ENCODE measurements at regions of chr22 and their contacts with region 1.

Region 1: DNA sequence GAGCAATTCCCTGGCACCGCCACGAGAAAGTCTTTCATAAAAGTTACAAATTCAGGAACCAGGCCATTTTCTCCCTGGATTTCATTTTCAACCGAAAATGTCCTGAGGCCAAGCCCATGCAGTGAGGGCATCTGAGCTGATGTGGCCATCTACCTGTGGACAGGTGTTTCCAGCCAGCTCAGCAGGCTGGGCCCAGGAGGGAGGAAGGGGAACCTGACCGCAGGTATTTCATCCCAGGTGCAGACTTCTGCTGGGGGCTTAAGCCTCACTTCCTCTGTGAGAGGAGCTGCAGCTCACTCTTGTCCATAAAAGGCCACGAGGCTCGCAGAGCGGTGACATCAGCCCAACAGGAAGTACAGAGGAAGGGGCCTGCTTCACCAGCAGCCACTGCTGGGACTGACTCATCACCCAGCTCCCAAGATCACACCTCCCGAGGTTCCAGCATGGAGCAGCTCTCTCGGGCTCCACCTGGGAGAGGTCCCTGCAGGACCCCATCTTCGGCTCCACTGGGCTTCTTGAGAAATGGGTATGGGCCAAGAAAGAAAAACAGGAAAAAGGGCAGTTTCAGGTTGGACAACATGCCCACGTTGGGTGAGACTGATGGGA is 56.4 kb downstream of the MYH9 start:
- DNase-seq: peak; percentile 90
- H3K4me3 Mint-ChIP-seq: peak overlapping the region; percentile 75
- H3K27ac Mint-ChIP-seq: peak overlapping the region; percentile 99
- H3K4me1 Mint-ChIP-seq: peaks cover 91% of the 10 kb centered on the region
- H3K27me3 Mint-ChIP-seq: no peaks in the 10 kb centered on the region

Region 2: DNA sequence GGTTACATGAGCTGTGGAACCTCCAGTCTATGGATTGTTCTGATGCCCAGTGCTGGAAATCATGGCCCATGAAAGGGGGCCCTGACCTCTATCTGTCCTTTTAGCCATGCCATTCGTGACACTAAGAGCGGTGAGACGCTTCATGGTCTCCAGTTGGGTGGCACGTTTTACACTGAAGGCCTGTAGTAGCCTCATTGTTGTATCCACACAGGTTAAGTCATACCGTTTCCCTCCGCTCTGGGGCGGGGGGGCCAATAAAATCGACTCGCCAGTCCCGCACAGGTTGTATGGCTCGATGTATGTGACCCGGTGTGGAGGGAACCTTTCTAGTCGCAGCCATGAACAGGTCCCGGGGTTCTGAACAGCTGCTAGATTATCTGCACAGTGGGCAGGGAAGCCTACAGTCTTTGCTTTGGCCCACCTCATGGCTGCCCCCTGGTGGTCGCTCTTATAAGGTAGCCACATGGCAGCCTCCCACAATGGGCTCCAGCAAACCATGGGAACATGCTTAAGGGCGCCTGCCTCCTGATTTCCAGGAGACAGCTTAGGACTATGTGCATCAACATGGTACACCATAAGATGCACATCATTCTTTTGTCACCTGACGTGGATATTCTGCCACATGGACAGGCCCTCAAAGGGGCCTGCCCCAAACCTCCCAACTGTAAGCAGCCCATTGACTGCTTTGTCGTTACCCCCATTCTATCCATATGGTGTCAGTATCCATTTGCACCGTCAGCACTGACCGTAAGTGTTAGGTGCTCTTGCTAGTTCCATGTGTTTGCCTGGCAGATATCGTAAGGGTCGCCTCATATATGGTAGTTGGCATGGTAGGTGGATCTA is 151.2 kb before region 1 on chr22:
- CTCF ChIA-PET with region 1: no interaction called
- POLR2A ChIA-PET with region 1: no interaction called
- intact Hi-C with region 1: no loop called
- DNase-seq: peak; percentile 89
- H3K4me3 Mint-ChIP-seq: no peak overlapping the region
- H3K27ac Mint-ChIP-seq: no peak overlapping the region
- H3K4me1 Mint-ChIP-seq: peaks cover 6% of the 10 kb centered on the region
- H3K27me3 Mint-ChIP-seq: no peaks in the 10 kb centered on the region

Region 3: GRCh38 chr22:36301384-36301828 is 30.0 kb before region 1 on chr22:
- CTCF ChIA-PET with region 1: interaction called, 28 read pairs
- POLR2A ChIA-PET with region 1: no interaction called
- intact Hi-C with region 1: no loop called
- DNase-seq: peak; percentile 88
- H3K4me3 Mint-ChIP-seq: no peak overlapping the region
- H3K27ac Mint-ChIP-seq: peak overlapping the region; percentile 67
- H3K4me1 Mint-ChIP-seq: peaks cover 8% of the 10 kb centered on the region
- H3K27me3 Mint-ChIP-seq: no peaks in the 10 kb centered on the region

Region 4: GRCh38 chr22:36358533-36359180 is 27.2 kb after region 1 on chr22:
- CTCF ChIA-PET with region 1: interaction called, 12 read pairs
- POLR2A ChIA-PET with region 1: interaction called, 28 read pairs
- intact Hi-C with region 1: loop called (anchors 1 kb)
- DNase-seq: no peak
- H3K4me3 Mint-ChIP-seq: peak overlapping the region; percentile 47
- H3K27ac Mint-ChIP-seq: peak overlapping the region; percentile 88
- H3K4me1 Mint-ChIP-seq: peaks cover 97% of the 10 kb centered on the region
- H3K27me3 Mint-ChIP-seq: no peaks in the 10 kb centered on the region

Region 5: DNA sequence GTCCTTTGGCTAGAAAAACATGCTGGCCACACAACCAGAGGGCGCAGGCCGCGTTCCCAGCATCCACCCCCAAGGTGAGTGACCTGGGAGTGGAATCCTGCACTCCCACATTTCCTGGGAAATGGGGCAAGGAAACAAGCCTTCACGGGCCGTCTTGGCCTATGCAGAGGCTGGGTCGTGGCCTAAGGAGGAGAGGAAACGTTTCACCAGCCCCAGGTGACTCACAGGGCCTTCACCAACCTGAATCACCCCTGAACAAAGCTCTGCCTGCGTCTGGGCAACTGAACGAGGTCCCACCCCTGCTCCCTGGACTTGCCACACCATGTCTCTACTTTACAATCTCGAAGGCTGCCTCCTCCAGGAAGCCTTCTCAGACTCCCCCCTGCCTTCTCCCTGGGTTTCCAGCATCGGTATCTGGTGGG is 43.2 kb after region 1 on chr22:
- CTCF ChIA-PET with region 1: interaction called, 34 read pairs
- POLR2A ChIA-PET with region 1: interaction called, 24 read pairs
- intact Hi-C with region 1: no loop called
- DNase-seq: peak; percentile 86
- H3K4me3 Mint-ChIP-seq: peak overlapping the region; percentile 48
- H3K27ac Mint-ChIP-seq: peak overlapping the region; percentile 93
- H3K4me1 Mint-ChIP-seq: peaks cover 97% of the 10 kb centered on the region
- H3K27me3 Mint-ChIP-seq: no peaks in the 10 kb centered on the region

Region 6: GRCh38 chr22:36387752-36388518 is 56.5 kb after region 1 on chr22 and contains the start of gene MYH9:
- CTCF ChIA-PET with region 1: interaction called, 21 read pairs
- POLR2A ChIA-PET with region 1: interaction called, 39 read pairs
- intact Hi-C with region 1: loop called (anchors 1 kb)
- DNase-seq: peak; percentile 100
- H3K4me3 Mint-ChIP-seq: peak within 1 kb of the TSS; percentile 95
- H3K27ac Mint-ChIP-seq: peak within 1 kb of the TSS; percentile 97
- H3K4me1 Mint-ChIP-seq: peaks cover 32% of the 10 kb centered on the region
- H3K27me3 Mint-ChIP-seq: no peaks in the 10 kb centered on the region
- total RNA-seq, gene MYH9: 712 to 720 TPM

Region 7: GRCh38 chr22:36470162-36470993 is 139.0 kb after region 1 on chr22:
- CTCF ChIA-PET with region 1: interaction called, 17 read pairs
- POLR2A ChIA-PET with region 1: no interaction called
- intact Hi-C with region 1: loop called (anchors 1 kb)
- DNase-seq: peak; percentile 88
- H3K4me3 Mint-ChIP-seq: no peak overlapping the region
- H3K27ac Mint-ChIP-seq: peak overlapping the region; percentile 57
- H3K4me1 Mint-ChIP-seq: peaks cover 21% of the 10 kb centered on the region
- H3K27me3 Mint-ChIP-seq: no peaks in the 10 kb centered on the region

Region 8: GRCh38 chr22:36528795-36529751 is 197.7 kb after region 1 on chr22 and contains the start of gene EIF3D:
- CTCF ChIA-PET with region 1: no interaction called
- POLR2A ChIA-PET with region 1: no interaction called
- intact Hi-C with region 1: loop called (anchors 2 kb)
- DNase-seq: peak; percentile 99
- H3K4me3 Mint-ChIP-seq: peak within 1 kb of the TSS; percentile 95
- H3K27ac Mint-ChIP-seq: peak within 1 kb of the TSS; percentile 98
- H3K4me1 Mint-ChIP-seq: peaks cover 20% of the 10 kb centered on the region
- H3K27me3 Mint-ChIP-seq: peaks cover 1% of the 10 kb centered on the region
- total RNA-seq, gene EIF3D: 314 to 321 TPM

Measured in activated CD4-positive, alpha-beta memory T cell treated with anti-CD3 and anti-CD28 coated beads for 36 hours (primary cell).